ENCODE measurements at regions of chr21 and their contacts with region 1.

Region 1: DNA sequence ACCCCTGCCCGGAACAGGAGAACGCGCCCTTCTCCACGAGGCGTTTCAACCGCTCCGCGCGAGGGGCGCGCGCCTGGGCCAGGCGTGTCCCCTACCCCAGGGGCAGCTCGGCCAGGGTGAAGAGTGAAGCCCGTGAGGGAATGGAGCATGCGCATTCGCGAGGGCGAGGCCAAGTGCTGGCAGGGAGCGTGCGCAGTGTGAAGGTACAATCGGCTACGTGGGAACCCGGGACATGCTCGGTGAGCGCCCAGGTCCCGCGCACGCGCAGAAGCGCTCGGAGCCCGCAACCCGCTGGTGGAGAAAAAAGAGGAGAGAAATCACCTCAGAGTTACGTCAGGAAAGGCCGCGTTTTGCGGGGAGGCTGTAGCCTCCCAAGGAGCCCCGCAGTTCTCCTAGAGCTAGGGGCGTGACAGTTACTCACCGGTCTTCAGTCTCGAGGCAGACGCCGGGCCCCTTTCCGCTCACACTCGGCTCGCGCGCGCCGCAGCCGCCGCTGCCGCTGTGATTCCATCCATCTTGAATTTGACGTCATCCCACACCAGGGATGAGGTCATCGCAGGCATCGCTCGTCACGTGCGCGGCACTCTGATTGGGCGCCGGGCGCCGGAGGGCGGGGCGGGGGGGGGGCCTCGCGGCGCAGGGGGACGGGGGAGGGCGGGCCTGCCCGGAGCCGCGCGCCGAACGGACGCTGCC is at the start of gene ZBTB21:
- DNase-seq: peak; percentile 98 to 99 (median 99)
- ATAC-seq: peak; percentile 97 to 99 (median 98)
- H3K4me3 ChIP-seq: peak within 1 kb of the TSS; percentile 72 to 100 (median 87)
- H3K27ac ChIP-seq: peak within 1 kb of the TSS; percentile 95 to 100 (median 99)
- H3K4me1 ChIP-seq: peaks cover 0 to 20% (median 11%) of the 10 kb centered on the region in 12 donors
- H3K27me3 ChIP-seq: peaks cover 0 to 2% (median 0%) of the 10 kb centered on the region in 9 donors
- CTCF ChIP-seq: no peak
- POLR2A ChIP-seq: peak in 1 of 2 donors; percentile 92
- total RNA-seq, gene ZBTB21: 4.3 to 10.2 (median 6.2) TPM

Region 2: GRCh38 chr21:41926117-41926806 is 83.7 kb before region 1 on chr21:
- intact Hi-C with region 1: loop called in 2 of 10 experiments (anchors 5 to 10 kb)
- DNase-seq: no peak
- ATAC-seq: peak; percentile 39 to 79 (median 44)
- H3K4me3 ChIP-seq: peak overlapping the region in 11 of 12 donors; percentile 10 to 62 (median 47)
- H3K27ac ChIP-seq: peak overlapping the region; percentile 60 to 92 (median 85)
- H3K4me1 ChIP-seq: peaks cover 0 to 75% (median 37%) of the 10 kb centered on the region in 12 donors
- H3K27me3 ChIP-seq: no peaks in the 10 kb centered on the region
- CTCF ChIP-seq: no peak
- POLR2A ChIP-seq: no peak

Region 3: GRCh38 chr21:41953831-41954653 is 55.9 kb before region 1 on chr21 and contains the start of gene C2CD2:
- intact Hi-C with region 1: loop called in 2 of 10 experiments (anchors 5 kb)
- DNase-seq: peak; percentile 69 to 88 (median 80)
- ATAC-seq: peak; percentile 39 to 82 (median 74)
- H3K4me3 ChIP-seq: peak within 1 kb of the TSS; percentile 62 to 97 (median 81)
- H3K27ac ChIP-seq: peak within 1 kb of the TSS; percentile 32 to 82 (median 70)
- H3K4me1 ChIP-seq: peaks cover 11 to 51% (median 36%) of the 10 kb centered on the region in 12 donors
- H3K27me3 ChIP-seq: no peaks in the 10 kb centered on the region
- CTCF ChIP-seq: peak in 1 of 12 donors; percentile 3
- POLR2A ChIP-seq: peak in 1 of 2 donors; percentile 26
- total RNA-seq, gene C2CD2: 3.8 to 13.9 (median 7.8) TPM

Region 4: GRCh38 chr21:42107881-42108553 is 98.0 kb after region 1 on chr21:
- intact Hi-C with region 1: loop called in 4 of 10 experiments (anchors 5 kb)
- DNase-seq: peak; percentile 29 to 79 (median 58)
- ATAC-seq: peak; percentile 72 to 93 (median 90)
- H3K4me3 ChIP-seq: peak overlapping the region in 2 of 12 donors; percentile 26 to 39
- H3K27ac ChIP-seq: peak overlapping the region in 1 of 12 donors; percentile 71
- H3K4me1 ChIP-seq: peaks cover 0 to 18% (median 2%) of the 10 kb centered on the region in 12 donors
- H3K27me3 ChIP-seq: peaks cover 0 to 5% (median 0%) of the 10 kb centered on the region in 9 donors
- CTCF ChIP-seq: peak in 11 of 12 donors; percentile 49 to 77 (median 63)
- POLR2A ChIP-seq: no peak

Region 5: GRCh38 chr21:42233067-42233961 is 223.3 kb after region 1 on chr21:
- intact Hi-C with region 1: loop called in 1 of 10 experiments (anchors 10 kb)
- DNase-seq: peak; percentile 66 to 89 (median 83)
- ATAC-seq: peak; percentile 68 to 86 (median 81)
- H3K4me3 ChIP-seq: peak overlapping the region in 7 of 12 donors; percentile 3 to 62 (median 13)
- H3K27ac ChIP-seq: peak overlapping the region; percentile 60 to 91 (median 84)
- H3K4me1 ChIP-seq: peaks cover 27 to 99% (median 86%) of the 10 kb centered on the region in 12 donors
- H3K27me3 ChIP-seq: no peaks in the 10 kb centered on the region
- CTCF ChIP-seq: peak in 9 of 12 donors; percentile 12 to 48 (median 38)
- POLR2A ChIP-seq: no peak